Activated B cell treated with CpG ODN at 0.5 μM for 24 hours (primary cell): ENCODE measurements at regions of chr15 and their contacts with region 1.

Region 1: DNA sequence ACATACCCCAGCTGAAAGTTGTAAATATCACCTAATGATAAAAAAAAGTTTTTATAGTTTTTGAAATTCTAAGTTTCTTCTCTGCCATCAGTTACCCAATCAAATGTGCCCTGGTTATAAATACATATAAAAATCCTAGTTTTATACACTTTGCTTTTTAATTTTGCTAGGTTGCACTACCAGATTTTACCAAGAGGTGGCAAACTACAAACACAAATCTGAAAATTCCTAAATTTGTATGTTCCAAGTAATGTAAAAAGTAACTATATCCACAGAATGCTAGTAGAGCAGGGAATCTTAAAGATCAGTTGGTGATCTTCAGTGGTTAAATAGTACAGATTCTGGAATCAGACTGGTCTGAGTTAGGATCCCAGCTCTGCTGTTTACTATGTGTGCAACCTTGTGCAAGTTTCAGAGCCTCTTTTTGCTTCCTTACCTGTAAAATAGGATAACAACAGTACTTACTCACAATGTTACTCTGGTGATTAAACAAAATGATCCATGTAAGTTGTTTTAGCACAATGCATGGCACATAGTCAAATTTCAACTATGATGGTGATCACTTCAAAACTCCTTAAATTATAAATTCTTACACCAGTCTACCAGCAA is 11.0 kb downstream of the TRPM7 start:
- DNase-seq: no peak
- ATAC-seq: no peak
- H3K4me3 Mint-ChIP-seq: no peak overlapping the region
- H3K27ac Mint-ChIP-seq: peak overlapping the region; percentile 41
- H3K4me1 Mint-ChIP-seq: peaks cover 19% of the 10 kb centered on the region
- H3K27me3 Mint-ChIP-seq: no peaks in the 10 kb centered on the region
- CTCF ChIP-seq: peak; percentile 61

Region 2: DNA sequence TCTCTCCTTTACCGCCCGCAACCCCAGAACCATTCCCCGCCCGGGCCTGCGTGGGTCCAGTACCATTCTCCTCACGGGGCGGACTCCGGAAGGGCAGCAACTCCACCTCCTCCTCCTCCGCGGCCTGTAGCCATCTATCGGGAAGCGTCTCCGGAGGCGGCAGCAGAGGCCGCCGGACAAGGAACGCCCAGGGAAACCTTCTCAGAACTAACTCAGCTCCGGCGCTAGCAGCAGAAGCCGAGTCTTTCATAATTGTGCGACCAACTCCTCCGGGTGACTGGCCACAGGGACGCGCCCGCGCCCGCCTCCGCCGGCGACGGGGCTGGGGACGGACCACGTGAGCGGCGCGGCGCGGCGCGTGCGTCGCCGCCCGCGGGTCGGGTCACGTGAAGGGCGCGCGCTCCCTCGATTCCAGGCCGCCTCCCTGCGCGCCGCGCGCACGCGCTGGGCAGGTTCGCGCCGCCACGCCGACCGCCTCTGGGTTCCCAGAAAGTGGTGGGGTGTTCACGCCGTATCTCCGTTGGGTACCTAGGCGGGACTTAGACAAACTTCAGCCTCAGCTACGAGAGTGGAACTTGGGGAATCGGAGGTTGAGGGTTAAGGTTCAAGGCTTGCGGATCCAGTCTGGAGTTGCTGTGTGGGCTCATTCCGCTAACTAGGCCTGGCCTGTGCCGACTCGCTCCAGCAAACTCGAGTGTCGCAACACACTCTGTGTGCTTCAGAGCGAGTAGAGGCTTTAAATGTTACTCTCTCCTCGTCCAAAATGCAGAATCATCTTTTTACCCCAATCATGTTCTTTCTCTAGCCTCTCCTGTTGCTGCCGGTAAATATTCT is 11.0 kb after region 1 on chr15 and contains the start of gene TRPM7:
- CTCF ChIA-PET with region 1: interaction called, 3 read pairs
- POLR2A ChIA-PET with region 1: interaction called, 3 read pairs
- intact Hi-C with region 1: loop called (anchors 1 kb)
- DNase-seq: peak; percentile 92
- ATAC-seq: peak; percentile 80
- H3K4me3 Mint-ChIP-seq: peak within 1 kb of the TSS; percentile 99
- H3K27ac Mint-ChIP-seq: peak within 1 kb of the TSS; percentile 92
- H3K4me1 Mint-ChIP-seq: peaks cover 58% of the 10 kb centered on the region
- H3K27me3 Mint-ChIP-seq: no peaks in the 10 kb centered on the region
- CTCF ChIP-seq: no peak
- total RNA-seq, gene TRPM7: 59.4 and 64.7 TPM in 2 replicates

Region 3: GRCh38 chr15:50712018-50712417 is 36.4 kb after region 1 on chr15:
- CTCF ChIA-PET with region 1: no interaction called
- POLR2A ChIA-PET with region 1: no interaction called
- intact Hi-C with region 1: loop called (anchors 5 kb)
- DNase-seq: no peak
- ATAC-seq: no peak
- H3K4me3 Mint-ChIP-seq: no peak overlapping the region
- H3K27ac Mint-ChIP-seq: no peak overlapping the region
- H3K4me1 Mint-ChIP-seq: no peaks in the 10 kb centered on the region
- H3K27me3 Mint-ChIP-seq: no peaks in the 10 kb centered on the region
- CTCF ChIP-seq: no peak

Region 4: DNA sequence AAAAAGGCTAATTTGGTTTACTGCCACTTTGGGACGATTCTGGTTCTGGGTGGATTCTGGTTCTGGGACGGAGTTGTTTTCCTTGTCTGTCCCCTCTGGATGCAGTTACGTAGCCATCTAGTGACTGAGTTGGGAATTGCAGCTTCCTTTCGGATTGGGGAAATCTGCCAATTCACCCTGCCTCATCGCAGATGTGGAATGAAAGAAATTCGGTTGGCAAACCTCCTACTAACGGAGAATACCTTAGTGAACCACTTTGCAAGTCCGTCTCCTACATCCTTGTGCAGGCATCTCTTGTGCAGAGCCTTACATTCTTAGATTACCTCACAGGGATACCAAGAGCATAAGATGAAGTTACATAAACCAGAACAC is 201.3 kb after region 1 on chr15:
- CTCF ChIA-PET with region 1: interaction called, 19 read pairs
- POLR2A ChIA-PET with region 1: no interaction called
- intact Hi-C with region 1: loop called (anchors 1 kb)
- DNase-seq: peak; percentile 27
- ATAC-seq: peak; percentile 45
- H3K4me3 Mint-ChIP-seq: peak overlapping the region; percentile 82
- H3K27ac Mint-ChIP-seq: peak overlapping the region; percentile 27
- H3K4me1 Mint-ChIP-seq: peaks cover 39% of the 10 kb centered on the region
- H3K27me3 Mint-ChIP-seq: peaks cover 4% of the 10 kb centered on the region
- CTCF ChIP-seq: peak; percentile 98

Region 5: GRCh38 chr15:51192521-51193280 is 517.1 kb after region 1 on chr15:
- CTCF ChIA-PET with region 1: no interaction called
- POLR2A ChIA-PET with region 1: no interaction called
- intact Hi-C with region 1: loop called (anchors 5 kb)
- DNase-seq: peak; percentile 57
- ATAC-seq: peak; percentile 49
- H3K4me3 Mint-ChIP-seq: no peak overlapping the region
- H3K27ac Mint-ChIP-seq: no peak overlapping the region
- H3K4me1 Mint-ChIP-seq: no peaks in the 10 kb centered on the region
- H3K27me3 Mint-ChIP-seq: peaks cover 37% of the 10 kb centered on the region
- CTCF ChIP-seq: peak; percentile 78